ENCODE measurements at regions of chr12 and their contacts with region 1.

Region 1: DNA sequence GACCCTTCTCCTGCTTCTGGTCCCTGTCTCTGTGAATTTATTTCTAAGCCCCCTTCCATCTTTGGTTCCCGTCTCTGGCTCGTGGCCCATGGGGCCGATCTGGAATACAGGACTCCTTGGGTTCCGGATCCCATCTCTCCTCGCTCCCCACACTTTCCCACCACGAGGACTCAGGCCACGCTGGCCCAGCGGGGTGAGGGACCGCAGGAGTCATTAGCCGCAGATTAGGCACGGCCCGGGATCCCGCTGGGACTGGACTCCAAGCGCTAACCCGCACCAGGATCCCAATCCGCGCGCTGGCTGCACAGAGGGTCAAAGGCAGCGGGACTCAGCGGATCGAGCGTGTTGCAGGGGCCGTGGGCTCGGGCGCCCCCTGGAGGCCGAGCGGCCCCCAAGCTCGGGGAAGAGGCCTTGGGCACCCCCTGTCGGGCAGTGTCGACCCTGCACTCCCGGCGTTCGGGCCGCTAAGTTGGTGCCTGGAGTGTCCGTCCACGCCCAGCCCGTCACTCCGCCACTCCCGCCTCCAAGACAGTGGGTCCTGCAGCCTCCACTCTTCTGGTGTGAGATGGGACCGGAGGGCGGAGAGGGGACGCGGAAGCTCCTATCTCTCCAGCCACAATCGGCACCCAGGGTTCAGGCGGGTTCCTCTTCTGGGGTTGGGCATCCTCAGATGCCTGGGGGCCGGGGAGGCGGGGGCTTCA is 9.5 kb downstream of the SHMT2 start:
- DNase-seq: peak; percentile 97
- H3K4me3 ChIP-seq: peak overlapping the region; percentile 16 to 77 (median 51)
- H3K27ac ChIP-seq: peak overlapping the region in 4 of 8 donors; percentile 18 to 68 (median 32)
- H3K4me1 ChIP-seq: peaks cover 69 to 100% (median 95%) of the 10 kb centered on the region in 6 donors
- H3K27me3 ChIP-seq: peaks cover 0 to 90% (median 79%) of the 10 kb centered on the region in 7 donors
- CTCF ChIP-seq: peak; percentile 100
- POLR2A ChIP-seq: no peak

Region 2: DNA sequence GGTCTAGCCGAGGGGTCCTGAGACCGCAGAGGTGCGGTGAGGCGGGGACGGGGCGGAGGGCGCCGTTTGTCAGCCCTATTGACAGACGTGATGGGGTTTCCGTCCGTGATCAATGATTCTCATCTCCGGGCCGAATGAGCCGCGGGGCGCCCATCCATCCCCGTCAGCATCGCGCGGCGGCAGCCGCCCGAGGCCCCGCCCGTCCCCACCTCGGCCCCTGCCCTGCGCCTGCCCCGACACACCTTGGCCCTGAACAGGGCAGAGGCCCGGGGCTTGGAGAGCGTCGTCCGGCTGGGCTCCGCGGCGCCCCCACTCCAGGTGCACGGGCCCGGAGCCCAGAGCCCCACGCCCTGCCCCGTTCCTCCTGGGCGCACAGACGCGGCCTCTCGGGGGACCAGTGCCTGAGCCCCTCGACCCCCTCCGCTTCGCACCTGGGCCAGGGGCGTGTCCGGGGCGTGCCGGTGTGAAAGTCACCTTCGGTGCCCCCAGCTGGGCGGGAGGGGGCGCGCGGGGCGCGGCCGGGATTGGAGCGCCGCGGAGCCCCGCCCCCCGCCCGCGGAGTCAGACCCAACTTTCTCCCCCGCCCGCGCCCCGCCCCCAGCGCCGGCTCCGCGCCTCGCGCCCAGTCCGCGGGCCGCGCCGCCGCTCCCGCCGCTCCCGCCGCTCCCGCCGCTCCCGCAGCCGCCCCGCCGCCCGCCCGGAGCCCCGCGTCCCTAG is 22.7 kb before region 1 on chr12 and contains the start of gene NXPH4:
- intact Hi-C with region 1: loop called (anchors 2 kb)
- DNase-seq: peak; percentile 83
- H3K4me3 ChIP-seq: peak within 1 kb of the TSS; percentile 27 to 74 (median 48)
- H3K27ac ChIP-seq: peak within 1 kb of the TSS in 1 of 8 donors; percentile 50
- H3K4me1 ChIP-seq: peaks cover 21 to 69% (median 51%) of the 10 kb centered on the region in 6 donors
- H3K27me3 ChIP-seq: peaks cover 0 to 94% (median 79%) of the 10 kb centered on the region in 7 donors
- CTCF ChIP-seq: no peak
- POLR2A ChIP-seq: no peak
- total RNA-seq, gene NXPH4: 0.28 to 0.60 (median 0.54) TPM in 3 of 7 donors, not detected in the others

Measured in spleen (tissue), 13 donors.